Mammary epithelial cell (primary cell): ENCODE measurements at regions of chr2 and their contacts with region 1.

Region 1: GRCh38 chr2:99489761-99490622 is at the start of gene REV1:
- DNase-seq: peak; percentile 93
- H3K4me3 ChIP-seq: peak within 1 kb of the TSS; percentile 76 to 97 (median 82)
- H3K27ac ChIP-seq: peak within 1 kb of the TSS; percentile 82
- H3K4me1 ChIP-seq: peaks cover 32% of the 10 kb centered on the region
- H3K27me3 ChIP-seq: no peaks in the 10 kb centered on the region
- CTCF ChIP-seq: peak; percentile 51 to 73
- total RNA-seq, gene REV1: 36.3 to 38.4 TPM

Region 2: GRCh38 chr2:99066075-99066958 is 423.7 kb before region 1 on chr2:
- CTCF ChIA-PET with region 1: no interaction called
- dilution Hi-C with region 1: no loop called
- in situ Hi-C with region 1: no loop called
- intact Hi-C with region 1: loop called (anchors 1 kb)
- DNase-seq: peak; percentile 49
- H3K4me3 ChIP-seq: peak overlapping the region in 2 of 3 experiments; percentile 4 to 16
- H3K27ac ChIP-seq: peak overlapping the region; percentile 18
- H3K4me1 ChIP-seq: peaks cover 5% of the 10 kb centered on the region
- H3K27me3 ChIP-seq: no peaks in the 10 kb centered on the region
- CTCF ChIP-seq: peak; percentile 65 to 72

Region 3: DNA sequence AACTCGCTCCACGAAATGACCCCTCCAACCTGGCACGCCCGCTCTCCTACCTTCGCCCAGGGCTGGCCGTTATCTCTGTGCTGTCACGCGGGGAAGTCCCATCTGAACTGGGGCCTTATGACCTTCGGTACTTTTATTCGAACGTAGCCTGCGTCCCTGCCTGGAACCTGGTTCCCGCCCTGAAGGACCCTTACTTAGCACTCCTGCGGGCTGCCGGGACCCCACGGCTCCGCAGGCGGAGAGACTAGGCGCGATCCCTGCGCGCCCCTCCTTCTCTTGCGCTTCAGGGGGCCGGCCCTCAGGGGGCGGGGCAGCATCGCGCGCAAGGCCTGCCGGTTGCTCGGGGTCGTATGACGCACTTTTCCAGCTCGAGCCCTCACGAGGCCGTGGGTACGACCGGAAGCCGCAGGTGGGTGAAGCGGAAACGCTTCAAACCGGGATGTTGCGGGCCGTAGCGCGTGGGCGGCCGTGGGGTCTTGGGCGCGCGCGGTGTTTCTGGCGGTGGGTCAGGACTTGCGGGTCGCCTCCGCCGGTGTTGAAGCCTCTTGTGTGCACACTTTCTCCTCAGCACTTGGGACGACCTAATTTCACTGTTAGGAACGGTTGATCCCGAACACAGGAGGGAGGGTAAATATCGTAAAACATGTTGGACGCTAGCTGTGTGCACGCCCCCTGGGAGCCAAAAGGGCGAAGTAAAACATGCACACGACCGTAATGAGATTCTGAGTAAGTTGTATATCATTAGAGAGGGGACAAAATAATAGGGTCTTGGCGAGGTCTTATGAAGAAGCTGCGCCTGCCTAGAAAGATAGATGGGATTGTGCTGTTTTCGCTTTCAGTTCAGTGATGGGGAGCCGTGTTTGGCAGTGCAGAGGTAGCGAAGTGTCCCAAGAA is 335.1 kb before region 1 on chr2 and contains the starts of genes LIPT1 and TSGA10:
- CTCF ChIA-PET with region 1: no interaction called
- dilution Hi-C with region 1: no loop called
- in situ Hi-C with region 1: loop called in 1 of 2 experiments (anchors 25 kb)
- intact Hi-C with region 1: loop called (anchors 5 kb)
- DNase-seq: peak; percentile 89
- H3K4me3 ChIP-seq: peak within 1 kb of the TSS; percentile 75 to 82 (median 78)
- H3K27ac ChIP-seq: peak within 1 kb of the TSS; percentile 78
- H3K4me1 ChIP-seq: peaks cover 11% of the 10 kb centered on the region
- H3K27me3 ChIP-seq: no peaks in the 10 kb centered on the region
- CTCF ChIP-seq: peak in 1 of 2 donors; percentile 24
- total RNA-seq, gene LIPT1: 3.7 to 4.4 TPM
- total RNA-seq, gene TSGA10: 5.7 to 6.0 TPM

Region 4: GRCh38 chr2:99337113-99338028 is 152.6 kb before region 1 on chr2 and contains the start of gene EIF5B:
- CTCF ChIA-PET with region 1: interaction called, 6 read pairs
- dilution Hi-C with region 1: no loop called
- in situ Hi-C with region 1: no loop called
- intact Hi-C with region 1: loop called (anchors 1 kb)
- DNase-seq: peak; percentile 94
- H3K4me3 ChIP-seq: peak within 1 kb of the TSS; percentile 69 to 93 (median 86)
- H3K27ac ChIP-seq: peak within 1 kb of the TSS; percentile 87
- H3K4me1 ChIP-seq: peaks cover 27% of the 10 kb centered on the region
- H3K27me3 ChIP-seq: no peaks in the 10 kb centered on the region
- CTCF ChIP-seq: peak; percentile 17 to 75
- total RNA-seq, gene EIF5B: 19.5 to 64.1 TPM

Region 5: DNA sequence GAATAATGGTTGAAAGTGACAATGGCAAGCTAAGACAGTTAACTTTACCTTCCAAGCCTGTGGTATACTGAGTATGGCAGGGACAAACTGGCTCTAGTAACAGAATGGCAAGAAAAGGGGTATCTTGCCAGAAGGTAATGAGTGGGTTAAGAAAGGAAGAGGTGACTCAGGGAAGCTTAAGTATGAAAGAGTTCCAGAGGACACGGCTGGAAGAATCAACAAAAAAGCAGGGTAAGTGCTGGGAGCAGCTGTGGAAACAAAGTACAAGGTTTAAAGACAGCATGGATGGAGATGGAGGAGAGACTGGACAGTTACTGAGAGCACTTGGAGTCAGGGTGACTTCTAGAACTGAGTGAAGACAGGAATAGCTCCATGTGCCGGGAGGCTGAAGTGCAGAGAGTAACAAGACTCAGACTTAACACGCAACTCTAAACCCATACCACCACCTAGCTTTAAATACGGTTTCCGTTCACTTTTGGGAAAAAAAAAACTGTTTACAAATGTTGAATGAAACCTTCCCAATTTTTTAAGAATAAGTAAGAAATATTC is 69.2 kb before region 1 on chr2:
- CTCF ChIA-PET with region 1: no interaction called
- dilution Hi-C with region 1: no loop called
- in situ Hi-C with region 1: no loop called
- intact Hi-C with region 1: loop called (anchors 2 kb)
- DNase-seq: no peak
- H3K4me3 ChIP-seq: no peak overlapping the region
- H3K27ac ChIP-seq: no peak overlapping the region
- H3K4me1 ChIP-seq: peaks cover 10% of the 10 kb centered on the region
- H3K27me3 ChIP-seq: no peaks in the 10 kb centered on the region
- CTCF ChIP-seq: no peak

Region 6: DNA sequence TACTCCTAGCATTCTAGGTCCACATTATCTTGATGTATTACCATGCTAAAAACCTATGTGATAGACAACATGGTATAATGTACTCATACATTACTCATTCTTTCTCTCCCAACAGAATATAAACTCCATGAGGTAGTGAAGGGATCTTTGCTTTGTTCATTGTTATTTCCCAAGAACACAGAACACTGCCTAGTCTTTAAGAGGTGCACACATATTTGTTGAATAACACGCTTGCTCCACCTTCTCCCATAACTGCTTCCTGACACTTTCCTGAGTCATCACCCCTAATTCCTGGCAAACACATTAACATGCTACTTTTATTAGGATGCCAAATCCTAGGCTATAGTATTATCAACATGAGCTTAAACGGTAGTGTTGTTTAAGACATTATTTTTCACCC is 41.4 kb before region 1 on chr2:
- CTCF ChIA-PET with region 1: no interaction called
- dilution Hi-C with region 1: no loop called
- in situ Hi-C with region 1: loop called in 1 of 2 experiments (anchors 10 kb)
- intact Hi-C with region 1: loop called (anchors 2 kb)
- DNase-seq: peak; percentile 94
- H3K4me3 ChIP-seq: no peak overlapping the region
- H3K27ac ChIP-seq: peak overlapping the region; percentile 85
- H3K4me1 ChIP-seq: peaks cover 18% of the 10 kb centered on the region
- H3K27me3 ChIP-seq: no peaks in the 10 kb centered on the region
- CTCF ChIP-seq: no peak

Region 7: GRCh38 chr2:99786636-99787390 is 296.8 kb after region 1 on chr2:
- CTCF ChIA-PET with region 1: no interaction called
- dilution Hi-C with region 1: no loop called
- in situ Hi-C with region 1: no loop called
- intact Hi-C with region 1: no loop called
- DNase-seq: no peak
- H3K4me3 ChIP-seq: no peak overlapping the region
- H3K27ac ChIP-seq: no peak overlapping the region
- H3K4me1 ChIP-seq: no peaks in the 10 kb centered on the region
- H3K27me3 ChIP-seq: no peaks in the 10 kb centered on the region
- CTCF ChIP-seq: no peak

Region 8: DNA sequence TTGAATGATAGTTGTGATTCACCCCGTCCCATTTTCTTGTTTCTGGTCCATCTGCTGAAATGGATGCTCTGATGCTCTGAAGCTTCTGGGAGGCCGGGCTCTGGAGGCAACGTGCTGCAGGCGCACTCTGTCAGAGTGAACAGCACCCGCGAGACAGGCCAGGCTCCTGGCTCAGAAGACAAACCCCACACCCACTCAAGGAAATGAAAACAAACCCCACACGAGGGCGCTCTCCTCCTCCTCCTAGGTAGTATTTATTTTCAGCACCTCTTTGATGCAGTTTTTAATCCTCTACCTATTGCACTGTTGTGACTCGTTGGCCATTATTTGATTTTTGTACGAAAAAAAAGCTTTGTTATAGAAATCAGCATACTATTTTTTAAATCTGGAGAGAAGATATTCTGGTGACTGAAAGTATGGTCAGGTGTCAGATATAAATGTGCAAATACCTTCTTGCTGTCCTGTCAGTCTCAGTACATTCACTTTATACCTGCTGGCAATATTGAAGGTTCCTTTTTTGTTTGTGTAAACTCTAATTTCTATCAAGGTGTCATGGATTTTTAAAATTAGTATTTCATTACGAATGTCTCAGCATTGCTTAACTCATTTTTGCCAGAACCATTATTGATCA is 937.8 kb after region 1 on chr2:
- CTCF ChIA-PET with region 1: no interaction called
- dilution Hi-C with region 1: no loop called
- in situ Hi-C with region 1: no loop called
- intact Hi-C with region 1: no loop called
- DNase-seq: peak; percentile 35
- H3K4me3 ChIP-seq: no peak overlapping the region
- H3K27ac ChIP-seq: no peak overlapping the region
- H3K4me1 ChIP-seq: no peaks in the 10 kb centered on the region
- H3K27me3 ChIP-seq: peaks cover 6% of the 10 kb centered on the region
- CTCF ChIP-seq: peak; percentile 27 to 66